Activated CD4-positive, alpha-beta T cell treated with anti-CD3 and anti-CD28 coated beads, Interleukin-2, amount 10 ng/mL, durations not matched to agents 24 days and 14 days (primary cell): ENCODE measurements at regions of chr19 and their contacts with region 1.

Region 1: GRCh38 chr19:4909897-4910593 is 744 bp downstream of the UHRF1 start:
- DNase-seq: peak; percentile 99
- H3K4me3 Mint-ChIP-seq: peak overlapping the region; percentile 86
- H3K27ac Mint-ChIP-seq: peak overlapping the region; percentile 86
- H3K4me1 Mint-ChIP-seq: peaks cover 35% of the 10 kb centered on the region
- H3K27me3 Mint-ChIP-seq: no peaks in the 10 kb centered on the region

Region 2: GRCh38 chr19:4867534-4868285 is 42.3 kb before region 1 on chr19 and contains the start of gene PLIN3:
- intact Hi-C with region 1: loop called (anchors 1 kb)
- DNase-seq: peak; percentile 97
- H3K4me3 Mint-ChIP-seq: peak within 1 kb of the TSS; percentile 85
- H3K27ac Mint-ChIP-seq: peak within 1 kb of the TSS; percentile 83
- H3K4me1 Mint-ChIP-seq: peaks cover 27% of the 10 kb centered on the region
- H3K27me3 Mint-ChIP-seq: no peaks in the 10 kb centered on the region
- total RNA-seq, gene PLIN3: 28.6 and 34.4 TPM in 2 replicates

Region 3: GRCh38 chr19:5001615-5002014 is 91.6 kb after region 1 on chr19:
- intact Hi-C with region 1: no loop called
- DNase-seq: peak; percentile 75
- H3K4me3 Mint-ChIP-seq: no peak overlapping the region
- H3K27ac Mint-ChIP-seq: no peak overlapping the region
- H3K4me1 Mint-ChIP-seq: peaks cover 14% of the 10 kb centered on the region
- H3K27me3 Mint-ChIP-seq: no peaks in the 10 kb centered on the region